ENCODE measurements at regions of chr3 and their contacts with region 1.

Region 1: GRCh38 chr3:120506828-120507774 is 56.3 kb upstream of the FSTL1 start:
- DNase-seq: no peak
- ATAC-seq: peak; percentile 80

Region 2: GRCh38 chr3:120420928-120421551 is 86.1 kb before region 1 on chr3:
- intact Hi-C with region 1: loop called (anchors 5 kb)
- DNase-seq: no peak
- ATAC-seq: peak; percentile 18

Measured in sciatic nerve (tissue), 2 donors.